CD4-positive, alpha-beta memory T cell (primary cell): ENCODE measurements at regions of chr2 and their contacts with region 1.

Region 1: DNA sequence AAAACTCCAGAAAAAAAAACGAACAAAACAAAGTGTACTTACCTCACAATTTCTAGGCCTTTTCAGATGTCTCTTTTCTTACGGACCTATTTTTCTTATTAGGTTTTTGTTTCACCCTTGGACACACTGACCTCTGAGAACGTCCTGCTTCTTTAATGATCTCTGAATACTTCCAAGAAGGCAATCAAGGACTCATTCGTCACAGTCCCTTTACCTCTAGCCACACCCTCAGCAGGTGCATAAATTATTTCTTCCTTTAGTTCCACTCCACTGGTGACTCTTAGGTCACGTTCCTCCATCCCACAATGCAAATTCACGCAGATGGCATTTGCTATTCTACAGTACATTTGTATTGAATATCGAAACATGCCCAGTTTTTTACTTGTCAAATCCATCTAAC is 21.9 kb downstream of the PELI1 start:
- DNase-seq: peak in 1 of 5 donors; percentile 37
- H3K4me3 ChIP-seq: no peak overlapping the region
- H3K4me3 Mint-ChIP-seq: peak overlapping the region in 2 of 8 donors; percentile 4 to 27
- H3K27ac ChIP-seq: no peak overlapping the region
- H3K27ac Mint-ChIP-seq: peak overlapping the region in 2 of 7 donors; percentile 11 to 63
- H3K4me1 ChIP-seq: peaks cover 29% of the 10 kb centered on the region
- H3K4me1 Mint-ChIP-seq: peaks cover 30 to 64% (median 45%) of the 10 kb centered on the region in 4 donors
- H3K27me3 ChIP-seq: no peaks in the 10 kb centered on the region
- H3K27me3 Mint-ChIP-seq: no peaks in the 10 kb centered on the region

Region 2: DNA sequence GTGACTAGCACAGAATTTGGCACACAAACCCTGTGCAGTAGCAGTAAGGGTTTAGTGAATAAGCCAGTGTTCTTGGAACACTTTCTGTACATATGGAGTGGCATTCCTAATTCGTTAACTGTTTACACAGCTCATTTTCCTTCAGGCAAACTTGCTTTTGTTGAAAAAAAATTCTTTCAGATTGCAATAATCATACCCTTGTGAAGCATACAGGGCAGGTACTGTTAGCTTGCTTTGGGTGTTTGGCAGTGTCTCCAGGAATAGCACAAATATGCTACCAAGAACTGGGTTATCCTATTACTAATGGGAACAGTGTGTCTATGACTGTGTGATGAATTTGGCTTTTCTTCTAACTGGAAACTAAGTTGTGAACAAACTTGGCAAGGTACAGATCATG is 247.2 kb before region 1 on chr2:
- CTCF ChIA-PET with region 1: no interaction called
- POLR2A ChIA-PET with region 1: no interaction called
- intact Hi-C with region 1: no loop called
- DNase-seq: no peak
- H3K4me3 ChIP-seq: no peak overlapping the region
- H3K4me3 Mint-ChIP-seq: no peak overlapping the region
- H3K27ac ChIP-seq: no peak overlapping the region
- H3K27ac Mint-ChIP-seq: peak overlapping the region in 2 of 7 donors; percentile 14 to 63
- H3K4me1 ChIP-seq: peaks cover 8% of the 10 kb centered on the region
- H3K4me1 Mint-ChIP-seq: peaks cover 31 to 45% (median 37%) of the 10 kb centered on the region in 4 donors
- H3K27me3 ChIP-seq: no peaks in the 10 kb centered on the region
- H3K27me3 Mint-ChIP-seq: no peaks in the 10 kb centered on the region

Region 3: GRCh38 chr2:64108666-64109241 is 13.6 kb before region 1 on chr2:
- CTCF ChIA-PET with region 1: interaction called, 4 read pairs
- POLR2A ChIA-PET with region 1: no interaction called
- intact Hi-C with region 1: loop called (anchors 2 kb)
- DNase-seq: no peak
- H3K4me3 ChIP-seq: no peak overlapping the region
- H3K4me3 Mint-ChIP-seq: peak overlapping the region in 1 of 8 donors; percentile 35
- H3K27ac ChIP-seq: no peak overlapping the region
- H3K27ac Mint-ChIP-seq: peak overlapping the region in 5 of 7 donors; percentile 1 to 47 (median 12)
- H3K4me1 ChIP-seq: peaks cover 53% of the 10 kb centered on the region
- H3K4me1 Mint-ChIP-seq: peaks cover 33 to 66% (median 44%) of the 10 kb centered on the region in 4 donors
- H3K27me3 ChIP-seq: no peaks in the 10 kb centered on the region
- H3K27me3 Mint-ChIP-seq: no peaks in the 10 kb centered on the region